Activated naive CD4-positive, alpha-beta T cell treated with anti-CD3 and anti-CD28 coated beads for 36 hours (primary cell): ENCODE measurements at regions of chr2 and their contacts with region 1.

Region 1: DNA sequence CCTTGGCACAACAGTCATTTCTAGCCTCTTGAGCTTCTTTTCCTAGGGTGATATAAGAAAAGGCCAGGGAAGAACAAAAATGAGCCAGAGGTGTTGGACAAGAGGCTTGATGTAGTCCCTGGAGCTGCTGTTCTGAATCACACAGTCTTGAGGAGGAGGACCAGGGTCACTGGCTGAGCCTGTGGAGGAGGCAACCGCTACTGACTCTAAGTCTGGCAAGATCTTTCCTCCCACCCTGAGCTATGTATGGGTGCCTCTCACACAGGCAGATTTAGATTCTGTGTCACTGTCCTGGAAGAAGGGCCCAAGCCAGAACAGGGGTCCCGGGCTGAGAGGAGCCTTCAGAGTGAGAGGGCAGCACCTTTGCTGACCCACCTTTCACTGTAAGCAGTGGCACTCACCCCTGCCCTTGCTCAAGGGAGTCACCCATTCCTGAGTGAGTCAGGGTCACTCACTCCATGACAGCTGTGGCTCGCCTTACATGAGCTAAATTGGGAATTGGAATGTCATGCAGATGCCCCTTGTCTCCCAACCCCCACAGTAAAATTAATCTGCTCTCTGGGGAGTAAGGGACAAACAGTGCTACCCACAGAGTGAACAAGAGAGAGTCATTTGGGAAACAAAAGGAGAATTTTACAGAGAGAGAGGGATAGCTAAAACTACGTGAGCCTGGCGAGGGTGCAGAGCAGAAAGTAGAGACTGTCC is at the start of gene TRIM54:
- DNase-seq: no peak
- H3K4me3 Mint-ChIP-seq: no peak within 1 kb of the TSS
- H3K27ac Mint-ChIP-seq: no peak within 1 kb of the TSS
- H3K4me1 Mint-ChIP-seq: peaks cover 2% of the 10 kb centered on the region
- H3K27me3 Mint-ChIP-seq: peaks cover 2% of the 10 kb centered on the region
- total RNA-seq, gene TRIM54: not detected

Region 2: DNA sequence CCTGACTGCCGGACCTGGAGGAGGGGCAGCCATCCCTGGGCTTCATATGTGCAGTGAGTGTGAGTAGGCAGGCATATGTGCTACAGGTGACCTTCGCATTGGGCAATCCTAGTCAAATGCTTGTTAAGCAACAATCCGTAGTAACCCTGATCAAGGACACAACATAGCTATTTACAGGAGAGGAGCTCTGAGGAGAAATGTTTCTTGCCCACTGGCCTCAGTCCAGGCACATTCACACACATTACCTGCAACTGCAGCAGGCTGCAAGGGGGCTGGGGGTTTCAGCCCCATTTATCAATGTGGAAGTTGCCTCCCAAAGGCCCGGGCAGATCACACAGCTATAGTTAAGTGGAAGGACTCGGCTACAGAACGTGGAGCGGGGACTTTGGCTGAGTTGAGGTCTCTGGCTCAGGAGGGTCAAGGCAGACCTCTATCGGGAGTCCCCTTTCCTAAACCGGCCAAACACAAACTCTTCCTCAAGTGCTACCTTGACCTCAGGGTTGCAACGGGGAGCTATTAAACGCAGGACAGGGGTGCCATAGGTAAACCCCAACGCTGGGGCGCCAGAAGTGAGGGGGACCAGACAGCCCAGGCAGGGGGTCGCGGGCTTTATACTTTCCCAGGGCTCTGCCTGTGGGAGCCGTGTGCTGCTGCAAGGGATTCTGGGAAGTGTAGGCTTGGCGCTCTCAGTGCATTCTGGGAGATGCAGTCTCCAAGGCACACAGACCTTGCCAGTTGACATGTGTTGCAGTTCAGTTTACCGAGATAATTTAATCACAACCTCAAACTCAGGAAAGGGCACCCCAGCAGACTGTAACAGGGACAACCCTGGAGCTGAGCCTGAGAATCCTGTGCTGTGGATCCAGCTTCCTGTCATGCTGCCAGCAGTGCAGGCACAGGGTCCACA is 186.0 kb before region 1 on chr2:
- CTCF ChIA-PET with region 1: interaction called, 33 read pairs
- intact Hi-C with region 1: loop called (anchors 1 kb)
- DNase-seq: peak; percentile 66
- H3K4me3 Mint-ChIP-seq: peak overlapping the region; percentile 62
- H3K27ac Mint-ChIP-seq: no peak overlapping the region
- H3K4me1 Mint-ChIP-seq: peaks cover 14% of the 10 kb centered on the region
- H3K27me3 Mint-ChIP-seq: no peaks in the 10 kb centered on the region

Region 3: DNA sequence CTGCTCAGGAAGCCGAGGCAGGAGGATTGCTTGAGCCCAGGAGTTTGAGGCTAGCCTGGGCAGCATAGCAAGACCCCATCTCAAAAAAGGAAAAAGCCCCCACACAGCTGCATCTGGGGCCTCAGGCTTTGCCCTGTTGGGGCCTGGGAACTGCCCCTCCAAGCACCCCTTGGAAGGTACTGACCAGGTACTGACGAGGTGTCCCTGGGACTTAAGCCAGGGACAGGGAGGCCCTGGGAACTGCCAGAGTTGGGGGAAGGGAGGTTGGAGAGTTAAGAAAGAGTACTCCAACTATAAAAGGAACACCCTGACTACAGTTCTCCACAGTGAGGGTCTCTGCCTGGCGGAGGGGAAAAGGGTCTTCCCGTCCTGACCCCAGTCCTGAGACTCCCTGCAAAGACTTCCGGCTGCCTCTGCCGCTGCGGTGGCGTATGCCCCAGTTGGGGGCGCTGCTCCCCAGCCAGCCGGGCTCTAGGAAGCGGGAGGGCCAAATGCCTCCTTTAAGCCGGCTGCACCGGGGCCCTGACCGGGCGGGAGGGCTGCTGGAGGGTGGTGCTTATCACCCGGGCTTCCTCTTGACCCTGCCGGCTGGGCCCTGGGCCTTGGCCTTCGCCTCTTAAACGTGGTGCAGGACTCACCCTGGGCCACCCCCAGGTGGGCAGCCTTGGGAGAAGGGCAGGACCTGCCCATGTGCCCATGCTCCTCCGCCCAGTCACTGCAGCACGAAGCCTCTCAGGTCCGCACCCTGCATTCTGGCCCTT is 31.9 kb before region 1 on chr2:
- CTCF ChIA-PET with region 1: interaction called, 68 read pairs
- intact Hi-C with region 1: loop called (anchors 1 kb)
- DNase-seq: peak; percentile 76
- H3K4me3 Mint-ChIP-seq: no peak overlapping the region
- H3K27ac Mint-ChIP-seq: no peak overlapping the region
- H3K4me1 Mint-ChIP-seq: no peaks in the 10 kb centered on the region
- H3K27me3 Mint-ChIP-seq: peaks cover 4% of the 10 kb centered on the region

Region 4: GRCh38 chr2:27264753-27265535 is 17.1 kb before region 1 on chr2:
- CTCF ChIA-PET with region 1: interaction called, 44 read pairs
- intact Hi-C with region 1: loop called (anchors 1 kb)
- DNase-seq: peak; percentile 81
- H3K4me3 Mint-ChIP-seq: peak overlapping the region; percentile 77
- H3K27ac Mint-ChIP-seq: no peak overlapping the region
- H3K4me1 Mint-ChIP-seq: peaks cover 26% of the 10 kb centered on the region
- H3K27me3 Mint-ChIP-seq: peaks cover 44% of the 10 kb centered on the region